Dendritic cell treated with granulocyte-macrophage colony-stimulating factor and Interleukin-4, amounts not matched to agents 40 ng/mL and 50 ng/mL, for 4 days (primary cell): ENCODE measurements at regions of chr17 and their contacts with region 1.

Region 1: DNA sequence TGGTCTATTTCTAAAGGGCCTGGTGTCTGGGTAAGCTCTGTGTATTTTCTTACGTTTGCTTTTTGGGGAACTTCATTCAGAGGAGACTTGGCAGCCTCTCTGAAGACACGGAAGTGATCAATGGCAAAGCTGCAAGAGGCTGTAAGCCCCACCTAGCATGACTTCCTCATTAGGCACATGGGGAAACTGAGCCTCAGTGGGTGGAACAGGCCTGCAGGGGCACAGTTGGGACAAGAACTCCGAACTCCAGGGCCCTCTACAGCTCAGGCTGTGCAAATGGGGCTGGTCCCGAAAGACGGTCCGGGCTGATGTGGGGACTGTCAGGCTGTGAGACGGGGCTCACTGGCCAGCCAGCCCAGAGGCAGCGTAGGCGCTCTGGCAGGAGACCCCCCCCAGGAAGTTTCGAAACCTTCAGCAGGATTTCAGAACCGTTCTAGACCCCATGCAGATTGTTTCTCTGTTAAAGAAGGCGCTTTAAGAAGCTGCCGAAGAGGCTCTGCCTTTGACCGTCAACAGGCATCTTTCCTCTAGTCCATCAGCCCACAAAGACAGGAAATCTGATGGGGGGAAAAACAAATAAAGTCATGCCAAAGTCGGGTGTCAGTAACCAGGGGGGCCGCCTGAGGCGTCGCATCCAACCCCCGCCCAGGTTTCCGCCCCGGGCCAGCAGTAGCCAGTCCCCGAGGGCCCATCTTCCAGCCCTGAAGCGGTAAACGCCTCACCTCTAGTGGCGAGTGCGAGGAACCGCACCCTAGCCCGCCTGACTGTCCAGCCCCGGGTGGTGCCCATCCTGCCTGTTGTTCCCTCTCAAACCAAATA is 79.8 kb upstream of the TBC1D3K start:
- H3K4me3 Mint-ChIP-seq: peak overlapping the region; percentile 49
- H3K27ac Mint-ChIP-seq: peak overlapping the region; percentile 84
- H3K4me1 Mint-ChIP-seq: peaks cover 32% of the 10 kb centered on the region
- H3K27me3 Mint-ChIP-seq: no peaks in the 10 kb centered on the region

Region 2: DNA sequence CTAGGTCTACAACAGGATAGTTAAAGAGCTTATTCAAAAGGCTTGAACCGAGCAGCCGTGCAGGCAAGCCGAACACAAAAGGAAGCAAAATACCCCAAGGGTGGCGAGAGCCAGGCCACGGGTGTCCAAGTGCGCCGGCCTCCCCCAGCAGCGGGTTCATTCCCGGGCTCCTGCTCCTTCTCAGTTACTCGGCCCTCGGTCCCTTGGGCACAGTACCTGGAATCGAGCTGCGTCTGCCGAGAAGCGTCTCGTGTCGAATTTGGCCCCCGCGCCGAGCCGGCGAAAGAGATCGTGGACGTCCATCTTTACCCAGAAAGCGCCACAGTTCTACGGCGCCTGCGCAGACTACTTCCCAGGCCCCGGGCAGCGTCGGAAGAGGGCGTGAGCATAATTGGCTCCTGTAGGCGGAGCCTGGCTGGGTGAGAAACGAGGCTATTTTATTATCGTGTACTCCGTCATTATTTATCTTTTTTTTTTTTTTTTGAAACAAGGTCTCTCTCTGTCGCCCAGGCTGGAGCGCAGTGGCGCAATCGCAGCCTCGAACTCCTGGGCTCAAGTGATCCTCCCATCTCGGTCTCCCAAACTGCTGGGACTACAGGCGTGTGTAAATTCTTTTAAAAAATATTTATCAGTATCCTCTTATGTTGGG is 201.1 kb before region 1 on chr17 and contains the start of gene DDX52:
- intact Hi-C with region 1: loop called (anchors 5 kb)
- H3K4me3 Mint-ChIP-seq: peak within 1 kb of the TSS; percentile 90
- H3K27ac Mint-ChIP-seq: peak within 1 kb of the TSS; percentile 94
- H3K4me1 Mint-ChIP-seq: peaks cover 39% of the 10 kb centered on the region
- H3K27me3 Mint-ChIP-seq: peaks cover 34% of the 10 kb centered on the region